Dorsolateral prefrontal cortex (tissue), 120 donors: ENCODE measurements at regions of chr5 and their contacts with region 1.

Region 1: DNA sequence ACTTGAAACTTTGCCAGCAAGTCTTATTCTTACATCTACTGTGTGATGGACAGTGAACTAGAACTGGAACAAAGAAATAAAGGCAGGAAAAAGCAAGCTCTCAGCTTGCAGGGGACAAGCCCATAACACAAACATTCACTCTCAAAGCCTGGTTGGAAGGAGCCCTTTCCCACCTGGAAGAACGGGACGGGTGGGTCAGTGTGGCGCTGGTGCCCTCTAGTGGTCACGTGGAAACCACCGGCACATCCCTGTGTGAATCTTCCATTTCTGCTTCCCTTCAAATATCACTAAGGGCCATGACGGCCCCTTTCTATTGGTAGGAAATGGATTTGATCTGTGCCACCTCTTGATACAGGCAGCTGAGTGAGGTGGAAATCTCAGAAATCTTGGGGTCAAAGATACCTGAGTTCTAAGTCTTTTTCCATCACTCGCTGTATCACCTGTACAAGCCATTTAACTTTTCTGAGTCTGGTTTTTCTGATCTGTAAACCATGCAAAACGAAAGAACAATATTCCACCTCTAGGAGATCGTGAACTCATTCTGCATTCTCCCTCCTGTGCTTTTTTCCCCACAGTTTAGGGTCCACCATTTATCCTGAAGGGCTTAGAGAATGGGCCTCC is 211.6 kb downstream of the MSX2 start:
- DNase-seq: peak in 9 of 10 donors; percentile 30 to 80 (median 67)
- H3K4me3 ChIP-seq: no peak overlapping the region
- H3K27ac ChIP-seq: peak overlapping the region in 9 of 59 donors; percentile 4 to 64 (median 21)
- H3K27me3 ChIP-seq: peaks cover 0 to 3% (median 0%) of the 10 kb centered on the region in 45 donors
- CTCF ChIP-seq: peak; percentile 72 to 97 (median 92)

Region 2: DNA sequence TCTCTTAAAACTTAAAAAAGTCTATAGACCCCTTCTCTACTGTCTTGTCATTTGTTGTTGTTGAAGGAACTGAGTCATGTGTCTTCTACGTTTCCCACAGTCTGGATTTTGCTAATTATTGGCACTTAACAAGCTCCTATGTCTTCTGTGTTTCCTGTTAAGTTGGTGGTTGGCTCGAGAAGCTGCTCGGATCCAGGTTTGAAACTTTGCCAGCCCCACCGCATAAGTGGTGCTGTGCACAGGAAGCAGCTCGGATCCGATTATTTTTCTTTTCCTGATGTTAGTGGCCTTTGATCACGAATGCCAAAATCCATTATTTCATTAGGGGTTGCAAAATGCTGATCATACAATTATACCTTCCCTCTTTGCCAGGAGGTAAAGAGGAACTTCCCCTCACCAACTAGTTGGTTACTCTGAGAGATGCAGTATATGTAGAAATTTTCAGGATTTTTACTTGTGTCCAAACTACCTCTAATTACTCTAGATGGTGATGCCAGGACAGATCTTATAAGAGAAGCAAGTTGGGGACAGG is 703.9 kb before region 1 on chr5:
- intact Hi-C with region 1: no loop called
- DNase-seq: no peak
- H3K4me3 ChIP-seq: no peak overlapping the region
- H3K27ac ChIP-seq: no peak overlapping the region
- H3K27me3 ChIP-seq: no peaks in the 10 kb centered on the region
- CTCF ChIP-seq: no peak

Region 3: DNA sequence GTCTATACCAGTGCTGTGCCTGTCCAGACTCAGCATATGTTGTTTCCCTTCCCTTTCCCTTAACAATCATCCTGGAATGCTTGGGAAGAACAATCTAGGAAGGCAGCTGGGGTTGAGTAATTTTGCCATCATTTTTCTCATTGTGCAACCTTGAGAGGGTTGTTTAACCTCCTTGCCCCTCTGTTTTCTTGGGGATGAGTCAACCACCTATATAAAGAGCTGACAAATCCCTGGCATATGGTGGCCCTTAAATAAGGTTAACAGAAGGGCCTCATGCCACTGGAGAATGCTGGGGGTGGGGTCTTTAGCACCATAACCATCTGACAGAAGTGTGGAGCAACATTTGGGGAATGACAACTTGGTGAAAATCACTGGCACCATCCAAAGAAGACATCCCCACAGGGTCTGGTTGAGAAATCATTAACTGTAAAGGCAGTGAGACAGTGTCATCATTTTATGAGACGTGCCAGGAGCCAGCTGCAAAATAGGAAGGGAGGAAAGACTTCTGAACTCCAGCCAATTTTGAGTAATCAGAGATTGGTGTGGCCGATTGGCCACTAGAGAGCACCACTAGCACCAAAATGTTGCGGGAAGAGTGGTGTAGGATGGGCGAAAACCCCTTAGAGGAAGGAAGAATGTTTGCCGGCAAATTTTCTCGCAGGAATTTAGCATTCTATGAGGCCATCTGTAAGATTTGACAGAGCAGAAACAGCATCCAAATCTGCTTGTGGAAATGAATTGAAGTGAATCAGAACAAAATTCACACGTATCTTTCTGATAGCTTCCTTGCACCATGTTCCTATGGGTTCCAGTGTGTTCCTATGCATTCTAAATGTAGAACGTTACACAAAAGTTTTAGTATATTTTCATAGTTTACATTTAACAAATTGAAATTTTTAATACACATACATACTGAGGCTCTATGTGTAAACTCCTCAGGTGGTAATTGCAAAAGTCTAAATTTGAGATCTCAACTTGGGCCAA is 97.8 kb before region 1 on chr5:
- intact Hi-C with region 1: loop called (anchors 1 to 10 kb)
- DNase-seq: peak in 3 of 10 donors; percentile 32 to 42 (median 40)
- H3K4me3 ChIP-seq: peak overlapping the region in 6 of 59 donors; percentile 1 to 34 (median 18)
- H3K27ac ChIP-seq: peak overlapping the region in 54 of 59 donors; percentile 17 to 94 (median 80)
- H3K27me3 ChIP-seq: peaks cover 0 to 5% (median 0%) of the 10 kb centered on the region in 45 donors
- CTCF ChIP-seq: peak in 55 of 56 donors; percentile 10 to 72 (median 54)